Keratinocyte (primary cell): ENCODE measurements at regions of chr10 and their contacts with region 1.

Region 1: GRCh38 chr10:112140110-112140970 is 43.2 kb downstream of the GPAM start:
- DNase-seq: peak; percentile 40
- H3K4me3 ChIP-seq: no peak overlapping the region
- H3K27ac ChIP-seq: no peak overlapping the region
- H3K4me1 ChIP-seq: no peaks in the 10 kb centered on the region
- H3K27me3 ChIP-seq: no peaks in the 10 kb centered on the region
- CTCF ChIP-seq: peak; percentile 94 to 98 (median 95)

Region 2: GRCh38 chr10:111756217-111757061 is 383.9 kb before region 1 on chr10:
- dilution Hi-C with region 1: loop called (anchors 25 kb)
- DNase-seq: no peak
- H3K4me3 ChIP-seq: no peak overlapping the region
- H3K27ac ChIP-seq: no peak overlapping the region
- H3K4me1 ChIP-seq: no peaks in the 10 kb centered on the region
- H3K27me3 ChIP-seq: no peaks in the 10 kb centered on the region
- CTCF ChIP-seq: peak; percentile 62 to 90 (median 84)

Region 3: GRCh38 chr10:112215342-112215774 is 75.0 kb after region 1 on chr10:
- dilution Hi-C with region 1: no loop called
- DNase-seq: no peak
- H3K4me3 ChIP-seq: no peak overlapping the region
- H3K27ac ChIP-seq: no peak overlapping the region
- H3K4me1 ChIP-seq: no peaks in the 10 kb centered on the region
- H3K27me3 ChIP-seq: no peaks in the 10 kb centered on the region
- CTCF ChIP-seq: no peak